CD8-positive, alpha-beta T cell (primary cell): ENCODE measurements at regions of chr10 and their contacts with region 1.

Region 1: DNA sequence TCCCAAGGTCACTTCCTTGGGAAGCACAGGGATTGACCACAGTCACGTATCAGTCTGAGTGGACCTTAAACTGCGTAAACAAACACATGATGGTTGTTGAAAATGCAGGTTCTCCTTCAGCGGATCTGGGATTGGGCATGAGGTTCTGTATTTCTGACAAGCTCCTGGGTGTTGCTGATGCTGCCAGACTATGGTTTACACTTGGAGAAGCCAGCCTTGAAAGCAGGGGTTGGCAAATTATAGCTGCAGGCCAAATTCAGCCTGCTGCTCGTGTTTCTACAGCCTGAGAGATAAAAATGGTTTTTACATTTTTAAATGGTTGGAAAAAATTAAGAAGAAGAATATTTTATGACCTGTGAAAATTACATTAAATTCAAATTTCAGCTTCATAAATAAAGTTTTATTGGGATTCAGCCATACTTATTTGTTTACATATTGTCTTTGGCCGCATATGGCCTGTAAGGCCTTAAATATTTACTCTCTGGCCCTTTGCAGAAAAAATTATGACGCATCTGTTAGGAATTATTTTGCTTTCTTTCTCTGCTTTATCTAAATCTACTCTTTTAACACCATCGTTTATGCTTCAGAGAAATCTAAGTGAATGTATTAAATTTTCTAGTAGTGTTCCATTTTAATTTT is 109.6 kb downstream of the SH2D4B start:
- DNase-seq: no peak
- ATAC-seq: no peak
- H3K4me3 ChIP-seq: no peak overlapping the region
- H3K4me3 Mint-ChIP-seq: no peak overlapping the region
- H3K27ac ChIP-seq: no peak overlapping the region
- H3K27ac Mint-ChIP-seq: no peak overlapping the region
- H3K4me1 ChIP-seq: no peaks in the 10 kb centered on the region
- H3K4me1 Mint-ChIP-seq: no peaks in the 10 kb centered on the region
- H3K27me3 ChIP-seq: no peaks in the 10 kb centered on the region
- H3K27me3 Mint-ChIP-seq: peaks cover 17% of the 10 kb centered on the region
- CTCF ChIP-seq: no peak

Region 2: DNA sequence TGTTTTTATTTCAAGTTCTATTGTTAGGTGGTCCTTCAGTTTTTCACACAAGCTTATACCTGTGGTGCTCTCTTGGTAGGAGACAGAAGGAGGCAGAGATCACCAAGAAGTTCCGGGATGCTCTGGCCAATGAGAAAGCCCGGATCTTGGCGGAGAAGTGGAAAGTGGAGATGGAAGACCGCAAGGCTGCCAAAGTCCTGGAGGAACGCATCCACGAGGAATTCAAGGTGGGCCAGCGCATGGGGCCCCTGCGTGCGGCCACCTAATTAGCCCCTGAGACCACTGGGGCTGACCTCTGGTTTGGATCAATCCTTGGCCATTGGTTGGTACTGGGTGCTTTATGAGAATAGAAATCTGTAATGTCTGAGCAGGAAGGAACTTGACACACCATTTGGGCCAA is 75.9 kb before region 1 on chr10:
- CTCF ChIA-PET with region 1: no interaction called
- POLR2A ChIA-PET with region 1: no interaction called
- intact Hi-C with region 1: loop called in 1 of 2 experiments (anchors 2 kb)
- DNase-seq: no peak
- ATAC-seq: no peak
- H3K4me3 ChIP-seq: no peak overlapping the region
- H3K4me3 Mint-ChIP-seq: no peak overlapping the region
- H3K27ac ChIP-seq: no peak overlapping the region
- H3K27ac Mint-ChIP-seq: no peak overlapping the region
- H3K4me1 ChIP-seq: no peaks in the 10 kb centered on the region
- H3K4me1 Mint-ChIP-seq: no peaks in the 10 kb centered on the region
- H3K27me3 ChIP-seq: no peaks in the 10 kb centered on the region
- H3K27me3 Mint-ChIP-seq: peaks cover 7% of the 10 kb centered on the region
- CTCF ChIP-seq: no peak

Region 3: GRCh38 chr10:80662577-80663261 is 15.4 kb after region 1 on chr10:
- CTCF ChIA-PET with region 1: interaction called, 17 read pairs
- POLR2A ChIA-PET with region 1: no interaction called
- intact Hi-C with region 1: no loop called
- DNase-seq: peak; percentile 45 to 81 (median 67)
- ATAC-seq: peak; percentile 78
- H3K4me3 ChIP-seq: no peak overlapping the region
- H3K4me3 Mint-ChIP-seq: peak overlapping the region; percentile 53
- H3K27ac ChIP-seq: no peak overlapping the region
- H3K27ac Mint-ChIP-seq: no peak overlapping the region
- H3K4me1 ChIP-seq: peaks cover 5% of the 10 kb centered on the region
- H3K4me1 Mint-ChIP-seq: peaks cover 5% of the 10 kb centered on the region
- H3K27me3 ChIP-seq: peaks cover 4 to 11% of the 10 kb centered on the region in 2 experiments
- H3K27me3 Mint-ChIP-seq: peaks cover 37% of the 10 kb centered on the region
- CTCF ChIP-seq: peak; percentile 96